ENCODE measurements at regions of chr1 and their contacts with region 1.

Region 1: GRCh38 chr1:15820478-15820877 is 13.0 kb upstream of the UQCRHL start:
- DNase-seq: no peak
- H3K4me3 Mint-ChIP-seq: no peak overlapping the region
- H3K27ac Mint-ChIP-seq: no peak overlapping the region
- H3K4me1 Mint-ChIP-seq: peaks cover 11% of the 10 kb centered on the region
- H3K27me3 Mint-ChIP-seq: no peaks in the 10 kb centered on the region

Region 2: DNA sequence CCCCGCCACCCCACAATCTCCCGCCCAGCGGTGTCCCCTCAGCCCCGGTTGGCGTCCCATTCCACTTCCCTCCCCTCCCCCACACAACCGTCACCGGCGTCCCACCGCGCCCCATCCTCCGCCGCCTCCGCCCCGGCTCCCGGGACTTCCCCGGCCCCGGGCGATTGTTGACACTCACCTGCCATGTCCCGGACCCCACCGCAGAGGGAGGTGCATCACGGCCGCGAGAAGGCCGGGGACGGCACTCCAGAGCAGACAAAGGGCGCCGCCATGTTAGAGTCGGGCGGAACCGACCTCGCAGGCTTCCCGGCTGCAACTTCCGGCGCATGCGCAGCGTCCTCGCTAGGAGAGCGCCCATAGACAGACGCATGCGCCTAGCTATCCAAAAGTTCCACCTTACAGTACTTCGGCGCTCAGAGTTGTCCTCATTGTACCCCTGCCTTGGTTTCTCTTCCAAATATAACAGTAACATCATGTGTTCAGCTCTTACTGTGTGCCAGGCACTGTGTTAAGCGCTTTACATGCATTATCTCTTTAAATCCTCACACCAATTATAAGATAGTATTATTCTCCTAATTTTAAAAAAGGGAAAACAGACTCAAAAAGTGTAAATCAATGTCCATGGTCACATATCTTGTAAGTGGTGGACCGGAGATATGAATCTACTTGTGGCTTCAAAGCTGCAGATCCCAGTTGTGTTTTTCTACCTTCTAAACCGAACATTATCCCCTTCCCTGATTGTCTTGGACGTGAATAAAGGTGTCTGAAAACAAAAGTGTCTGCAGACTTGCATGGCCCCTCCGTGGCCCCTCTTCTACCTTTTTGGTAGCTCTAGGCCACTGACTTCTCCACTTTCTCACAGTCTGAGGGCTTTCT is 155.6 kb after region 1 on chr1 and contains the start of gene ZBTB17:
- CTCF ChIA-PET with region 1: interaction called, 10 read pairs
- DNase-seq: peak; percentile 96
- H3K4me3 Mint-ChIP-seq: peak within 1 kb of the TSS; percentile 89
- H3K27ac Mint-ChIP-seq: peak within 1 kb of the TSS; percentile 86
- H3K4me1 Mint-ChIP-seq: peaks cover 31% of the 10 kb centered on the region
- H3K27me3 Mint-ChIP-seq: no peaks in the 10 kb centered on the region

Region 3: GRCh38 chr1:15994590-15995351 is 174.3 kb after region 1 on chr1:
- CTCF ChIA-PET with region 1: interaction called, 25 read pairs
- DNase-seq: peak; percentile 60
- H3K4me3 Mint-ChIP-seq: no peak overlapping the region
- H3K27ac Mint-ChIP-seq: no peak overlapping the region
- H3K4me1 Mint-ChIP-seq: no peaks in the 10 kb centered on the region
- H3K27me3 Mint-ChIP-seq: peaks cover 29% of the 10 kb centered on the region

Region 4: DNA sequence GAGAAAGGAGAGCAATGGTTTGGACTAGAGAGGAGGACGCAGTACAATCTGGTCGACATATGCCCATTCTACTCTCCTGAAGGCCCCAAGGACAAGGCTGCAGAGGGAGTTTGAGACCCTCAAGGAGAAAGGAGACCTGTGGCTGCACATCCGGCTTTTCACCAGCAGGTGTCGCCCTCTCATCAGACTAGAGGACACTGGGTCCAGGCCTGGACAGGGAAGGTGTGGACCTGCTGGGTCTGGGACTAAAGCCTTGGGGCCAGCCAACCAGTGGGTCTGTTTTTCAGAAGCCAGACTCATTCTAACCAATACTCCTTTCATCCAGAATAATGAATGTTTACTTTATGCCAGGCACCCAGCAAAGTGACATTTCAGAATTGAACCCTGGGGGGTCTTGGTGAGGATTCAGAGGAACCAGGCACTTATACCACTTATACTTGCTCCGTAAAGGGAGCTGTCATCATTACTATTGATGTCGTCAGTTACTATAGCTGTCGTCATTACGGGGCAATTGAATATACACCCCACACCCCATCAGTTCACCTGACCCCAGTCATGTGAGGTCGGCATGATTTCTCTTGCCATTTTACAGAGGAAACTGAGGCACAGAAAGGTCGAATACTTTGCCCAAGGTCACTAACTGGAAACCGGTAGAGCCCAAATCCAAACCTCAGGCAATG is 188.7 kb after region 1 on chr1:
- CTCF ChIA-PET with region 1: interaction called, 33 read pairs
- DNase-seq: peak; percentile 82
- H3K4me3 Mint-ChIP-seq: no peak overlapping the region
- H3K27ac Mint-ChIP-seq: no peak overlapping the region
- H3K4me1 Mint-ChIP-seq: peaks cover 4% of the 10 kb centered on the region
- H3K27me3 Mint-ChIP-seq: peaks cover 50% of the 10 kb centered on the region

Measured in activated naive CD4-positive, alpha-beta T cell treated with anti-CD3 and anti-CD28 coated beads, Interleukin-2, amount 10 ng/mL, durations not matched to agents 7 days and 5 days (primary cell).